GM10248 (cell line): ENCODE measurements at regions of chr6 and their contacts with region 1.

Region 1: GRCh38 chr6:143575440-143575839 is 63.9 kb upstream of the FUCA2 start:
- DNase-seq: peak; percentile 75
- CTCF ChIP-seq: peak; percentile 77

Region 2: DNA sequence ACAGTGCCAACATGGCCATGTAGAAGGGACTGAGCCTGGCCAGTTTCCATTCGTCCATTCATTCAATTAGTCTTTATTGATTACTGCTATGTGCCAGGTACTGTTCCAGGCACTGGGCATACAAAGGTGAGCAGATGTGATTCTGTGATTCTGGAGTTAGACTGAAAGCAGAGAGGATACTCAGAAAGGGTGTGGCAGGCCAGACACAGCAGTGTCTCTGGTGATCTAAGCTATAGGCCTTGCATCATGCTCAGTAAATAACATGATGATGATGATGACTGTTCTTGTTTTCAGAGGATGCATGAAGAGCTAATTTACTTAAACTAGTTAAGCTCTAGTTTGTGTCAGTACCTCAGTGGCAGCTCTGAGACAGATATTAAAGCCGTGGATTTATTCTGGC is 32.6 kb before region 1 on chr6:
- CTCF ChIA-PET with region 1: interaction called, 10 read pairs
- POLR2A ChIA-PET with region 1: no interaction called
- DNase-seq: no peak
- CTCF ChIP-seq: no peak

Region 3: DNA sequence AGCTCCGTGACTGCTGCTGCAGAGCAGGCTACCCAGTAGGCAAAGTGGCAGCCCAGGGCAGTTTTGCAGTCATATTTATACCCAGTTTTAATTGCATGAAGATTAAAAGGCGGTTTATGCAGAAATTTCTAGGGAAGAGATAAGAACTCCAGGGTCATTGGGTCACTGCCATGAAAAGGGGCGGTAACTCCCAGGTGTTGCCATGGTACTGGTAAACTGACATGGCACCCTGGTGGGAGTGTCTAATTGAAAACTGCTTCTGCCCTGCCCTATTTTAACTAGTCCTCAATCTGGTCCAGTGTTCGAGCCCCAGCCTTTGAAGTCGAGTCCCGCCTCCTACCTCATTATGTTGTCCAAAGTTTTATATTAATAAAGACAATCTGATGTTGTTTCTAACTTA is 11.1 kb after region 1 on chr6:
- CTCF ChIA-PET with region 1: interaction called, 13 read pairs
- POLR2A ChIA-PET with region 1: no interaction called
- DNase-seq: no peak
- CTCF ChIP-seq: no peak

Region 4: GRCh38 chr6:143677891-143678791 is 102.7 kb after region 1 on chr6 and contains the start of gene PHACTR2:
- CTCF ChIA-PET with region 1: no interaction called
- POLR2A ChIA-PET with region 1: no interaction called
- DNase-seq: peak; percentile 48
- CTCF ChIP-seq: no peak

Region 5: DNA sequence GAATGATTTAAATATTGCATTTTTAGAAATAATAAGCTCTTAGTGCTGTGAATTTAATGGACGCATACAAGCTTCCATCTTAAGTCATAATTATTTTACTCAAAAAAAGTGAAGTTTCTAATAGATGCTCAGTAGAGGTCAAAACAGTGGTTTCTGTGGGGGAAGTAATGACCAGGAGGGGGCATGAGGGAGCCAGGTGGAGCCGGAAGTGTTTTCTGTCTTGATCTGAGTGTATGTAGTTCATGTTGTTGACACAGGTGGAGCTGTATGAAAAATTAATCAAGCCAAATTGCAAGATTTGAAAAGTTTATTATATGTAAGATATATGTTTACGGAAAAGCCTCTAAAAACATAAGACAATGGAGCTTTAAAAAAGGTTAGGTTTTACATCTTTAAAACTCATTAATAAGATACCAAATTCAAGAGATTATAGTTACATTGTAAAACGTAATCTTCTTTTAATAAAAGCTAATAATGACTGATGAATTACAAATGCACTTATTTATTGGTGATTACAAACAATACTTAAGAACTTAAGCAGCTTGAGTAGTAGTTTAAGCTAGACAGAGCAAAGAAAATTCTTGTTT is 364.7 kb after region 1 on chr6:
- CTCF ChIA-PET with region 1: interaction called, 26 read pairs
- POLR2A ChIA-PET with region 1: no interaction called
- DNase-seq: peak; percentile 81
- CTCF ChIP-seq: peak; percentile 62

Region 6: GRCh38 chr6:144063744-144064401 is 488.4 kb after region 1 on chr6:
- CTCF ChIA-PET with region 1: interaction called, 10 read pairs
- POLR2A ChIA-PET with region 1: no interaction called
- DNase-seq: peak; percentile 94
- CTCF ChIP-seq: peak; percentile 40

Region 7: DNA sequence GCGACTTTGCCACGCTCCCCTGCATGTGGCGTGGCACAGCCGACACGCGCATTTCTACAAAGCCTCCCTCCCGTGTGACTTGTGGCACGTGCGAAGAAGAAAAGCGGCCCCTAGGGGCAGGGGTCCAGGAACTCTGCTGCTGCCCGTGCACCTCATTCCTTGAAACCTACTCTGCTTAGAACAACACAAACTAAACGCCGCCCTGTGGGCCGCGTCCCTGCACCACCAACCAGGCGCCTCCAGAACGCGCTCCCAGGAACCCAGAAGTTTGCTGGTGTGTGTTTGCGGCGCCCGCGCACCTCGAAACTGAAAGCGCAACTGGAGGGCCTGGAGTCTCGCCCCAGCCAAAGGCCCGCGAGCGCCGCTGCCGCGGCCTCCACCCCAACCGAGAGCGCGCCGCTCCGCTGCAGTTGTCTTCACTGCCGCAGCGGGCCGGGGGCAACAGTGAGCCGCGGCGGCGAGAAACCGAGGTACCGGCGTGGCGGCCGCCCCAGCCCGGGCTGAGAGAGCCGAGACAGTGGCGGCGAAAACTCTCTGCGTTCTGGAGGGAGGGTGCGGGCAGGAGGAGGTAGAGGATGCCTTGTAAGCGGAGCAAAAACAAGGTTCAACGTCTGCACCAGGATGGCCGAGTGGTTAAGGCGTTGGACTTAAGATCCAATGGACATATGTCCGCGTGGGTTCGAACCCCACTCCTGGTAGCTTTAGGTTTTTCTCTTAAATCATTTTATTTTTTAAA is 640.7 kb after region 1 on chr6:
- CTCF ChIA-PET with region 1: interaction called, 16 read pairs
- POLR2A ChIA-PET with region 1: no interaction called
- DNase-seq: peak; percentile 94
- CTCF ChIP-seq: peak; percentile 62